Activated CD4-positive, alpha-beta T cell treated with anti-CD3 and anti-CD28 coated beads for 36 hours (primary cell): ENCODE measurements at regions of chr4 and their contacts with region 1.

Region 1: GRCh38 chr4:103204111-103204510 is 6.0 kb upstream of the CENPE start:
- DNase-seq: no peak
- ATAC-seq: no peak
- H3K4me3 Mint-ChIP-seq: no peak overlapping the region
- H3K27ac Mint-ChIP-seq: no peak overlapping the region
- H3K4me1 Mint-ChIP-seq: no peaks in the 10 kb centered on the region
- H3K27me3 Mint-ChIP-seq: peaks cover 7% of the 10 kb centered on the region

Region 2: GRCh38 chr4:103786014-103786413 is 581.9 kb after region 1 on chr4:
- CTCF ChIA-PET with region 1: no interaction called
- POLR2A ChIA-PET with region 1: no interaction called
- intact Hi-C with region 1: loop called in 1 of 2 experiments (anchors 10 kb)
- DNase-seq: peak; percentile 11
- ATAC-seq: no peak
- H3K4me3 Mint-ChIP-seq: no peak overlapping the region
- H3K27ac Mint-ChIP-seq: no peak overlapping the region
- H3K4me1 Mint-ChIP-seq: no peaks in the 10 kb centered on the region
- H3K27me3 Mint-ChIP-seq: no peaks in the 10 kb centered on the region

Region 3: DNA sequence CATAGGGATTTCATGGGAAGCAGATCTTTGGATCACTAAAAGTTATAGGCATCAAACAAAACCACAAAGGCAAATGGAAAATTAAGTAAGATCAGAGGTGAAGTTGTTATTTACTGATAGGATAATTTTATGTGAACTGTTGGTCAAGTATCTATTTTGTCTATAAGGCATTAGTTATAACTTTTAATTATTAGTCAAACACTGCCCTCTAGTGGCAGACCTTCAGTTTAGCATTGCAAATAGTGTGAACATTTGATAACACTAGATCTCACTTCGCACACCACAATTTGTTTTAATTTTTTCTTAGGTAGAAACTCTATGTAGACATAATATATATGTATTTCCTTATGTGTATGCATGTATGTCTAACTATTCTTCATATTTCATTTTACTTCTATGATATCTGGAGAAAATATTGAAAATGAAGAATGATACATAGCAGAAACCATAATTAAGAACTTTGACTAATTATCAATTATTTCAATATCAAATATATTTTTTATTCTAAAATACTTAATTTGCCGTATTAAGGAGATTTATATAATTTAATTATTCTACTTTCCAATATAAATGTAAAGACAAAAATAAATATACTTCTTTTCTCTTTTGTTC is 730.2 kb after region 1 on chr4:
- CTCF ChIA-PET with region 1: no interaction called
- POLR2A ChIA-PET with region 1: no interaction called
- intact Hi-C with region 1: loop called (anchors 5 to 10 kb)
- DNase-seq: peak; percentile 14
- ATAC-seq: no peak
- H3K4me3 Mint-ChIP-seq: no peak overlapping the region
- H3K27ac Mint-ChIP-seq: no peak overlapping the region
- H3K4me1 Mint-ChIP-seq: no peaks in the 10 kb centered on the region
- H3K27me3 Mint-ChIP-seq: no peaks in the 10 kb centered on the region